GM18951 (cell line): ENCODE measurements at regions of chr2 and their contacts with region 1.

Region 1: GRCh38 chr2:74919827-74920226 is 38.6 kb upstream of the POLE4 start:
- POLR2A ChIP-seq: no peak

Region 2: DNA sequence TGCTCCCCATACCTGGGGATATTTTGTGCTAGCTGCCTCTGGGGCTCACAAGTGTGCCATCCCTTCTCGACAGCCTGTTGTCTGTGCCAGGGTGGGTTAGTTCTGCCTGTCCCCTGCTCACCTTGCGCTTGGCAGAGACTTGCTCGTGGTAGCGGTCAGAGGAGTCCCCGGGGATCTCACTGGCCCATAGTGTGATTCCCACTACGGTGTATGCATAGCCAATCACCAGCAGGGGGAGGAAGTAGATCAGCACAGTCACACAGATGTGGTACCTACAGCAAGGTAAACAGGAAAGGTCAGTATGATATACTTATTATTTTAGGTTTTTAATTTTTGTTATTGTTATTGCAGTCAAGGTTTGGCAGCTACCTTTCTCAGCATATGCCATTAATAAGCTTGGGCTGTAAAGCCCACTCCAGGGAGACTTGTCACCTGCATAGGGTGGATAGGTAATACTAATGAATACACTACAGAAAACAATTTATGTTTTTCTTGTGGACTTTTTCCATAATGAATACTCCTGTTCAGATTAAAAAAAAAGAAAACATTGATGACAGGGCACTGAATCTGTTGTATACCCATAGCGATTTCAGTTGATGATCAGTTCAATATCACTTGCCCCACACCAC is 133.8 kb after region 1 on chr2:
- in situ Hi-C with region 1: loop called (anchors 5 kb)
- POLR2A ChIP-seq: no peak

Region 3: GRCh38 chr2:75375646-75376582 is 456.1 kb after region 1 on chr2:
- in situ Hi-C with region 1: loop called (anchors 25 kb)
- POLR2A ChIP-seq: no peak

Region 4: GRCh38 chr2:75608684-75609333 is 689.0 kb after region 1 on chr2:
- in situ Hi-C with region 1: loop called (anchors 25 kb)
- POLR2A ChIP-seq: no peak